PC-9 (cell line): ENCODE measurements at regions of chr10 and their contacts with region 1.

Region 1: GRCh38 chr10:132421392-132421877 is 24.4 kb downstream of the PWWP2B start:
- DNase-seq: peak; percentile 63 to 74
- H3K4me3 ChIP-seq: peak overlapping the region; percentile 35; the same call in 1 of the 2 replicates
- H3K27ac ChIP-seq: peak overlapping the region; percentile 88
- H3K4me1 ChIP-seq: peaks cover 51% of the 10 kb centered on the region
- H3K27me3 ChIP-seq: no peaks in the 10 kb centered on the region
- CTCF ChIP-seq: no peak

Region 2: DNA sequence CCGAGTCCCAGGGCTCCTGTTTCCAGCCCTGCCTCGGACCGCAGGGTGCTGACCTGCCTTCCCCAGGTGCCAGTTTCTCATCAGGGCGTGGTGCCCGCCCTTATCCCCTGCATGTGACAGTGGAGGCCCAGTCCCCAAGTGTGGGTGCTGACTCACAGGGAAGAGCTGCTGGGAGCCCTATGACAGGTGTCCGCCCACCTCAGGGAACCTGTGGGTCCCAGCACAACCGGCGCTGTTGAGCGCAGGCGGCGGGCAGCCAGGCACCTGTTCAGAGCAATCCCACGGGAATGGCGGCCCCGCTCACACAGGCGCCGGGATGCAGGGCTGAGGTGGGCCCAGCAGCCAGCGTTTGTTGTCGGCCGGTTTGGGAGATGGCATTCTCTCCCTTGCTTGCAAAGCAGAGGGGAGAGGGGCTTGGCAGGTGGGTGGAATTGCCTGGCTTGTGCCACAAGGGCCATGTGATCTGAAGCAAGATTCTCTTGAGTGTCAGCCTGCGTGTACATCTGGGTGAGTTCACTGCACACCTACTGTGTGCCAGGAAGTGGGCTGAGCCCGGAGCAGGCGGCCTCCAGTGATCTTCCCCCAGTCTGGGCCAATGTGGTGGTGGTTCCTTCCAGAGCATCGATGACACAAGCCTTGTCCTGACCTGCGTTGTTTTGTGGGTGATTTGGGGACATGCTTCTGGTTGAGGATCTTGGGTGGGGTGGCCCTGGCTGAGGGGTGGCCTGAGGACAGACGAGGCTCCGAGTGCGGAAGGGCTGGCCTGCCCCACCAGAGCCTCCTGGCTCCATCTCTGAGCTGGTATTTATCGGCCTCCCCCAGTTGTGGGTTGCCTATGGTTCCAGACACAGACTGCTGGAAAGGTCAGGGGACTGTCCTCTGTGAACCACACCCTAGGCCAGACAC is 22.1 kb before region 1 on chr10:
- CTCF ChIA-PET with region 1: no interaction called
- POLR2A ChIA-PET with region 1: interaction called, 5 read pairs
- intact Hi-C with region 1: loop called (anchors 1 kb)
- DNase-seq: peak; percentile 72 to 80
- H3K4me3 ChIP-seq: no peak overlapping the region
- H3K27ac ChIP-seq: no peak overlapping the region
- H3K4me1 ChIP-seq: peaks cover 37% of the 10 kb centered on the region
- H3K27me3 ChIP-seq: no peaks in the 10 kb centered on the region
- CTCF ChIP-seq: no peak

Region 3: GRCh38 chr10:132446661-132447194 is 25.3 kb after region 1 on chr10:
- CTCF ChIA-PET with region 1: interaction called, 17 read pairs
- POLR2A ChIA-PET with region 1: interaction called, 7 read pairs
- intact Hi-C with region 1: loop called (anchors 1 kb)
- DNase-seq: peak; percentile 72 to 77
- H3K4me3 ChIP-seq: peak overlapping the region; percentile 64
- H3K27ac ChIP-seq: peak overlapping the region; percentile 99
- H3K4me1 ChIP-seq: peaks cover 48% of the 10 kb centered on the region
- H3K27me3 ChIP-seq: no peaks in the 10 kb centered on the region
- CTCF ChIP-seq: peak; percentile 74

Region 4: GRCh38 chr10:132458593-132459300 is 37.3 kb after region 1 on chr10:
- CTCF ChIA-PET with region 1: no interaction called
- POLR2A ChIA-PET with region 1: no interaction called
- intact Hi-C with region 1: no loop called
- DNase-seq: peak in 1 of 2 experiments; percentile 48
- H3K4me3 ChIP-seq: no peak overlapping the region
- H3K27ac ChIP-seq: no peak overlapping the region
- H3K4me1 ChIP-seq: no peaks in the 10 kb centered on the region
- H3K27me3 ChIP-seq: no peaks in the 10 kb centered on the region
- CTCF ChIP-seq: peak; percentile 90